ENCODE measurements at regions of chr6 and their contacts with region 1.

Region 1: GRCh38 chr6:26285143-26286134 is 79.6 kb upstream of the BTN3A2 start:
- DNase-seq: peak; percentile 100
- H3K4me3 Mint-ChIP-seq: peak overlapping the region; percentile 91
- H3K27ac Mint-ChIP-seq: peak overlapping the region; percentile 92
- H3K4me1 Mint-ChIP-seq: peaks cover 10% of the 10 kb centered on the region
- H3K27me3 Mint-ChIP-seq: no peaks in the 10 kb centered on the region
- CTCF ChIP-seq: no peak

Region 2: DNA sequence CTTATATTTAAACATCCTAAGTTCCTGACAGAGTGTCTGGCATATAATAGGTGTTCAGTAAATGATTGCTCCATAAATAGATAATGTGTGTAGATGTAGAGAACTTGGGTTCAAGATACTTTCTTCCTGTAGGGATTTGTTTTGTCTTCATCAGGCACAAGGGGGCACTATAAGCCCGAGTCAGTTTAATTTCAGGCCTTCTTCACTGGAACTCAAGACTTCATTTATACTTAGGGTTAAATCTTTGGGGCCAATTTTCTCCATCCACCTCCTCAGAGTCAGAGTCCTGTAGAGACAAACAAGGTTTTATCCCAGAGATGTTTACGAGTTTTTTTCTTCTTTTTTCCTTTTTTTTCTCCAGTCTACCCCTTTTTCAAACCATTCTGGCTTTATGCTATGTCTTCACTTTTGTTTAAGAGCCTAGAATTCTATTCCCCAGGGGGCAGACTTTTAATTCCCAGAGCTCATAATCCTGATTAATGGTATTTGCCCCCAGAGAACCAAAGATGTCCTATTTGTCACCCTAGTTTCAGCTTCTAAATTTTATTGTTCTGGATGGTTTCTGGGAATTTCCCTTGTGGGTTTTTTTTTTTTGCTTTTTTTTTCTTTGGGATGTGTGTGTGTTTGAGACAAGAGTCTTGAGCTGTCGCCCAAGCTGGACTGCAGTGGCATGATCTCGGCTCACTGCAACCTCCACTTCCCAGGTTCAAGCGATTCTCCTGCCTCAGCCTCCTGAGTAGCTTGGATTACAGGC is 109.8 kb before region 1 on chr6:
- CTCF ChIA-PET with region 1: interaction called, 4 read pairs
- POLR2A ChIA-PET with region 1: interaction called, 25 read pairs
- intact Hi-C with region 1: no loop called
- DNase-seq: peak; percentile 82
- H3K4me3 Mint-ChIP-seq: peak overlapping the region; percentile 23
- H3K27ac Mint-ChIP-seq: peak overlapping the region; percentile 70
- H3K4me1 Mint-ChIP-seq: peaks cover 28% of the 10 kb centered on the region
- H3K27me3 Mint-ChIP-seq: no peaks in the 10 kb centered on the region
- CTCF ChIP-seq: peak; percentile 70

Region 3: GRCh38 chr6:26223650-26224546 is 61.5 kb before region 1 on chr6:
- CTCF ChIA-PET with region 1: no interaction called
- POLR2A ChIA-PET with region 1: interaction called, 82 read pairs
- intact Hi-C with region 1: no loop called
- DNase-seq: peak; percentile 91
- H3K4me3 Mint-ChIP-seq: no peak overlapping the region
- H3K27ac Mint-ChIP-seq: no peak overlapping the region
- H3K4me1 Mint-ChIP-seq: peaks cover 6% of the 10 kb centered on the region
- H3K27me3 Mint-ChIP-seq: no peaks in the 10 kb centered on the region
- CTCF ChIP-seq: no peak

Region 4: GRCh38 chr6:26295691-26296555 is 10.5 kb after region 1 on chr6:
- CTCF ChIA-PET with region 1: no interaction called
- POLR2A ChIA-PET with region 1: interaction called, 41 read pairs
- intact Hi-C with region 1: no loop called
- DNase-seq: peak; percentile 87
- H3K4me3 Mint-ChIP-seq: peak overlapping the region; percentile 63
- H3K27ac Mint-ChIP-seq: peak overlapping the region; percentile 81
- H3K4me1 Mint-ChIP-seq: peaks cover 22% of the 10 kb centered on the region
- H3K27me3 Mint-ChIP-seq: no peaks in the 10 kb centered on the region
- CTCF ChIP-seq: no peak

Region 5: DNA sequence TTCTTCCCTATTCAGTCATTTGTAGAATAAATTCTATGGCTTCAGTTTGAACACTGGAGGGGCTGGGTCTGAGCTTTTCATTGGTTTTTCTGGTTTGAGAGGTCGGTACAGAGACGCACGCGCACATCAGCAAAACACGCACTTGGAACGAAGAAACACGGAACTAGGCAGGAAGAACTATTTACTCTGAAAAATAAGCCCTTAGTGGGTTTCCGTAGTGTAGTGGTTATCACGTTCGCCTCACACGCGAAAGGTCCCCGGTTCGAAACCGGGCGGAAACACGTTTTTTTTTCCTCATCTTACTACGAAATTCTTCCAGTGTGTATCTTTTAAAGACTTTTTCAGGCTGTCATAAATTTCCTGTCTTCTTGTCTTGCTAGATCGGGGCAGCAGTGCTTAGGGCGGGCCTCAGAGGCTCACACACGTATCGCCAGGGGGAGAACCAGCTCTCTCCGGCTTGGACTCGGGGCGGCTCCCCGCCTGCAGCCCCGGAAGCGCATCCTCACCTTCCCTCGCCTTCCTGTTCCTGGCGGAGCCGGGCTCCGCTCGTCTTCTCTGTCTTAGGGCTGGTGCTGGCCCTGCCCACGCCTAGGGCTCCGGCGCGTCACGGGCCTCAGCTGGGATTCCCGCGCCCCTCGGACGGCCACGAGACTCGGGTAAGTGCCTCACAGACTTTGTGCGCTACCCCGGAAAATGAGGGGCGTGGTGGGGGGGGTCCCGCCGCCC is 252.6 kb after region 1 on chr6 and contains the start of gene HMGN4:
- CTCF ChIA-PET with region 1: no interaction called
- POLR2A ChIA-PET with region 1: interaction called, 13 read pairs
- intact Hi-C with region 1: no loop called
- DNase-seq: peak; percentile 89
- H3K4me3 Mint-ChIP-seq: peak within 1 kb of the TSS; percentile 84
- H3K27ac Mint-ChIP-seq: peak within 1 kb of the TSS; percentile 98
- H3K4me1 Mint-ChIP-seq: peaks cover 23% of the 10 kb centered on the region
- H3K27me3 Mint-ChIP-seq: no peaks in the 10 kb centered on the region
- CTCF ChIP-seq: no peak
- total RNA-seq, gene HMGN4: 71.7 and 75.4 TPM in 2 replicates